B cell (primary cell): ENCODE measurements at regions of chr2 and their contacts with region 1.

Region 1: GRCh38 chr2:44579136-44579836 is 217.5 kb downstream of the CAMKMT start:
- DNase-seq: no peak
- ATAC-seq: no peak
- H3K4me3 ChIP-seq: no peak overlapping the region
- H3K4me3 Mint-ChIP-seq: peak overlapping the region; percentile 79
- H3K27ac ChIP-seq: peak overlapping the region in 1 of 2 donors; percentile 64
- H3K27ac Mint-ChIP-seq: no peak overlapping the region
- H3K4me1 ChIP-seq: peaks cover 4 to 8% of the 10 kb centered on the region in 2 donors
- H3K4me1 Mint-ChIP-seq: peaks cover 15% of the 10 kb centered on the region
- H3K27me3 ChIP-seq: no peaks in the 10 kb centered on the region
- H3K27me3 Mint-ChIP-seq: no peaks in the 10 kb centered on the region
- CTCF ChIP-seq: no peak

Region 2: GRCh38 chr2:44522846-44523245 is 56.4 kb before region 1 on chr2:
- CTCF ChIA-PET with region 1: no interaction called
- POLR2A ChIA-PET with region 1: interaction called, 12 read pairs
- intact Hi-C with region 1: no loop called
- DNase-seq: no peak
- ATAC-seq: no peak
- H3K4me3 ChIP-seq: no peak overlapping the region
- H3K4me3 Mint-ChIP-seq: no peak overlapping the region
- H3K27ac ChIP-seq: no peak overlapping the region
- H3K27ac Mint-ChIP-seq: no peak overlapping the region
- H3K4me1 ChIP-seq: no peaks in the 10 kb centered on the region
- H3K4me1 Mint-ChIP-seq: peaks cover 2% of the 10 kb centered on the region
- H3K27me3 ChIP-seq: no peaks in the 10 kb centered on the region
- H3K27me3 Mint-ChIP-seq: no peaks in the 10 kb centered on the region
- CTCF ChIP-seq: no peak